ENCODE measurements at regions of chr5 and their contacts with region 1.

Region 1: DNA sequence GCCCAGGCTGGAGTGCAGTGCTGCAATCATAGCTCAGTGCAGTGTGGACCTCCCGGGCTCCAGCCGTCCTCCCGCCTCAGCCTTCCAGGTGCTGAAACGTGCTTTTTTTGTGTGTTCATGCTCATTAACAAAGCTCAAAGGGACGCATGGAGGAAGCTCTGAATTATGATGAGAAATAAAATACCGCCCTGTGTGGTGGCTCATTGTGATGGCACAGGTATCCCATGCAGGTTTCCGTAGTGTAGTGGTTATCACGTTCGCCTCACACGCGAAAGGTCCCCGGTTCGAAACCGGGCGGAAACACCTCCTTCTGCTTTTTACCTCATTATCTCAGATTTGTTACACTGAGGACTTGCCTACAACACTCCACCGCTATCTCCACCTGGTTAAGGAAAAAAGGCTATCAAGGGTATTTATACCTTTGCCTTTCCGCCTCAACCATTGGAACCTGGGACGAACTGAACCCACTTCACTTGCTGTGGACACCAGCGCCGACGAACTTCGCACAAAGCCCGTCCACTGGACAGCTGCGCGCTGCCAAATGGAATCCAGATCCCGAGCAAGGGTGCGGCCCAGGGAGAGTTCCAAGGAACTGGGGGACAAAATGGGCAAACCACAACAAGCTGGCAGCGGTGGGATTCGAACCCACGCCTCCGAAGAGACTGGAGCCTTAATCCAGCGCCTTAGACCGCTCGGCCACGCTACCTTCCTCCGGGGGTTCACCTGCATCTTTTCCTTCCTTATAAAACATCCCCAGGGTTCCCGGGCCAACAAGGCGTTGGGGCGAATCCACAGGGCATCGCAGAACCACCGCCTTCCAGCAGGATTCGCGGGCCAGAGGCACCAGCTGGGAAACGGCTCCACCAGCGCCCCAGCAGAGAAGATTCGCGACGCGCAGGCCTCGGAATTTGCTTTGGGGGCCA is 26.3 kb downstream of the OR2V2 start:
- DNase-seq: peak; percentile 86
- H3K4me3 Mint-ChIP-seq: peak overlapping the region; percentile 86
- H3K27ac Mint-ChIP-seq: peak overlapping the region; percentile 80
- H3K4me1 Mint-ChIP-seq: peaks cover 36% of the 10 kb centered on the region
- H3K27me3 Mint-ChIP-seq: peaks cover 57% of the 10 kb centered on the region

Region 2: GRCh38 chr5:181159286-181159829 is 14.3 kb before region 1 on chr5:
- CTCF ChIA-PET with region 1: interaction called, 7 read pairs
- POLR2A ChIA-PET with region 1: no interaction called
- intact Hi-C with region 1: loop called (anchors 1 kb)
- DNase-seq: peak; percentile 96
- H3K4me3 Mint-ChIP-seq: peak overlapping the region; percentile 36
- H3K27ac Mint-ChIP-seq: peak overlapping the region; percentile 72
- H3K4me1 Mint-ChIP-seq: peaks cover 33% of the 10 kb centered on the region
- H3K27me3 Mint-ChIP-seq: peaks cover 17% of the 10 kb centered on the region

Region 3: DNA sequence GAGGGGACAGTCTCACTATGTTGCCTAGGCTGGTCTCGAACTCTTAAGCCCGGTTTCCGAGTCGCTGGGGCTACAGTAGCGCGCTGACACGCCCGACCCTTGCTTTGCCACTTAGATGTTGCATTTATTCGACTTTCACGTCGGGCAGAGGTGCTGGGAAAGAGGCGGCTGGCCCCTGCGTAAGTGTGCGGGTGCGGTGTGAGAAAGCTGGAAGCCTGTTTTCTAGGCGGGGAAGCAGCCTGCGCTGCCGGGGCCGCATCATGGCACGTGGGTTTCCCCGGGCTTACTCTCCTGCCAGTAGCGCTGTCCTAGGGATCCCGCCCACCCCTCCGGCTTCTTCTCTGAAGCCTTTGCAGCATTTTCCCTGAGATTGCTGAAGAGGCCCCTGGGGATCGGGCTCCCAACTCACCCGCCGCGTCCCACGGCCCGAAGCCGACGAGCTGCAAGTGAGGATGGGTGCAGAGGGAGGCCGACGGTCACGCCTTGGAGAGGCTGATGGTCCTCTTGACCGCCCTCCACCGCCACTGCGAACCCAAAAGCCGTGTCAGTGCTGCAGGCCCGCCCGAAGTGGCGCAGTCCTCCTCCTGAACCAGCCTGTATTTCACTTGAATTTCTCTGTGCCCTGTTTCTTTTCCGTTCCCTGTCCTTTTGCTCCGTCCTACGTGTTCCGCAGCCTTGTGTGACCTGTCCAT is 43.6 kb after region 1 on chr5:
- CTCF ChIA-PET with region 1: no interaction called
- POLR2A ChIA-PET with region 1: no interaction called
- intact Hi-C with region 1: loop called (anchors 1 kb)
- DNase-seq: peak; percentile 76
- H3K4me3 Mint-ChIP-seq: peak overlapping the region; percentile 78
- H3K27ac Mint-ChIP-seq: peak overlapping the region; percentile 72
- H3K4me1 Mint-ChIP-seq: peaks cover 42% of the 10 kb centered on the region
- H3K27me3 Mint-ChIP-seq: peaks cover 8% of the 10 kb centered on the region

Measured in activated CD4-positive, alpha-beta memory T cell treated with anti-CD3 and anti-CD28 coated beads for 36 hours (primary cell).